Activated CD4-positive, alpha-beta T cell treated with anti-CD3 and anti-CD28 coated beads for 36 hours (primary cell): ENCODE measurements at regions of chr12 and their contacts with region 1.

Region 1: GRCh38 chr12:112409064-112409905 is at the start of gene RPL6:
- DNase-seq: peak; percentile 86
- ATAC-seq: peak; percentile 92
- H3K4me3 Mint-ChIP-seq: peak within 1 kb of the TSS; percentile 93
- H3K27ac Mint-ChIP-seq: peak within 1 kb of the TSS; percentile 100
- H3K4me1 Mint-ChIP-seq: peaks cover 42% of the 10 kb centered on the region
- H3K27me3 Mint-ChIP-seq: no peaks in the 10 kb centered on the region
- total RNA-seq, gene RPL6: 2,097 to 2,202 TPM

Region 2: DNA sequence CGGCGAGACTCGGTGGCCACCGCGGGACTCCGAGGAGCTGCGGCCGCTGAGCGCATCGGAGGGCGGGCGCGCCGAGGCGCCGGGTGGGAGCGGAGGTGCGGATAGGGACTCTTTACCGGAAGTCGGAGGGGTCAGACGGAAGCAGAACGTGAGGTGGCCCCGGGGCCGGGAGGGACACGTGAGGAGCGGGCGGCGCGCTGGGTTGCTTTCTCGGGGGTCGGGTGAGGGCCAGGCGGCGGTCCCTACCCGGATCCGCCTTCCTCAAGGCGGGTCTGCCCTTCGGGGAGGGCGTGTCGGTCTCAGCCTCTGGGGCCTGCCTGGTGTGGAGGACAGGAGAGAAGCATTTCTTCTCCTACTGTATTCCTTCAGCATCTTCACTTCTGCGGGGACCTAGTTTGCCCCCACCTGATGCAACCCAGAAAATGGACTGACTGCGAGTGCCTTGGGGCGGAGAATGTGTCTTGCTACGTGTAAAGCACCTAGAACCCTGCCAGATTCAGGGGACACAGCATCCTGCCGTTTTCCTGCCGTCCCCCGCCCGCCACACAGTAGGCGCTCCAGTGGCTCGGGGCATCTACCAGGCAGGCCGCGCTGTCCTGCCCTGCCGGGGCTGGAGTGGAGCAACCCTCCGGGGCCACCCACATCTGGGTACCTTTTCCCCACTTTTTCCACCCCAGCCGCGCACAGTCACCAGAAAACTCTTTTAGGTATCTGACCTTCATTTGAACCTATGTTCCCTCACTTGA is 809.7 kb before region 1 on chr12:
- CTCF ChIA-PET with region 1: no interaction called
- POLR2A ChIA-PET with region 1: no interaction called
- intact Hi-C with region 1: loop called in 1 of 2 experiments (anchors 1 kb)
- DNase-seq: peak; percentile 91
- ATAC-seq: peak; percentile 83
- H3K4me3 Mint-ChIP-seq: peak overlapping the region; percentile 81
- H3K27ac Mint-ChIP-seq: peak overlapping the region; percentile 92
- H3K4me1 Mint-ChIP-seq: peaks cover 17% of the 10 kb centered on the region
- H3K27me3 Mint-ChIP-seq: no peaks in the 10 kb centered on the region

Region 3: GRCh38 chr12:111841750-111842555 is 567.3 kb before region 1 on chr12 and contains the start of gene MAPKAPK5:
- CTCF ChIA-PET with region 1: no interaction called
- POLR2A ChIA-PET with region 1: no interaction called
- intact Hi-C with region 1: loop called (anchors 1 to 5 kb)
- DNase-seq: peak; percentile 97
- ATAC-seq: peak; percentile 81
- H3K4me3 Mint-ChIP-seq: peak within 1 kb of the TSS; percentile 87
- H3K27ac Mint-ChIP-seq: peak within 1 kb of the TSS; percentile 96
- H3K4me1 Mint-ChIP-seq: peaks cover 50% of the 10 kb centered on the region
- H3K27me3 Mint-ChIP-seq: no peaks in the 10 kb centered on the region
- total RNA-seq, gene MAPKAPK5: 47.5 to 57.5 TPM

Region 4: GRCh38 chr12:112005419-112006395 is 403.6 kb before region 1 on chr12:
- CTCF ChIA-PET with region 1: no interaction called
- POLR2A ChIA-PET with region 1: no interaction called
- intact Hi-C with region 1: no loop called
- DNase-seq: no peak
- ATAC-seq: no peak
- H3K4me3 Mint-ChIP-seq: no peak overlapping the region
- H3K27ac Mint-ChIP-seq: no peak overlapping the region
- H3K4me1 Mint-ChIP-seq: peaks cover 54% of the 10 kb centered on the region
- H3K27me3 Mint-ChIP-seq: no peaks in the 10 kb centered on the region

Region 5: GRCh38 chr12:112125250-112125999 is 283.9 kb before region 1 on chr12 and contains the start of gene TRAFD1:
- CTCF ChIA-PET with region 1: no interaction called
- POLR2A ChIA-PET with region 1: interaction called, 6 read pairs
- intact Hi-C with region 1: loop called in 1 of 2 experiments (anchors 1 kb)
- DNase-seq: peak; percentile 99
- ATAC-seq: peak; percentile 99
- H3K4me3 Mint-ChIP-seq: peak within 1 kb of the TSS; percentile 83
- H3K27ac Mint-ChIP-seq: peak within 1 kb of the TSS; percentile 82
- H3K4me1 Mint-ChIP-seq: peaks cover 38% of the 10 kb centered on the region
- H3K27me3 Mint-ChIP-seq: no peaks in the 10 kb centered on the region
- total RNA-seq, gene TRAFD1: 52.5 to 54.1 TPM

Region 6: GRCh38 chr12:112198120-112198733 is 211.1 kb before region 1 on chr12:
- CTCF ChIA-PET with region 1: interaction called, 7 read pairs
- POLR2A ChIA-PET with region 1: no interaction called
- intact Hi-C with region 1: loop called (anchors 1 kb)
- DNase-seq: peak; percentile 78
- ATAC-seq: peak; percentile 98
- H3K4me3 Mint-ChIP-seq: no peak overlapping the region
- H3K27ac Mint-ChIP-seq: no peak overlapping the region
- H3K4me1 Mint-ChIP-seq: no peaks in the 10 kb centered on the region
- H3K27me3 Mint-ChIP-seq: no peaks in the 10 kb centered on the region